ENCODE measurements at regions of chr9 and their contacts with region 1.

Region 1: DNA sequence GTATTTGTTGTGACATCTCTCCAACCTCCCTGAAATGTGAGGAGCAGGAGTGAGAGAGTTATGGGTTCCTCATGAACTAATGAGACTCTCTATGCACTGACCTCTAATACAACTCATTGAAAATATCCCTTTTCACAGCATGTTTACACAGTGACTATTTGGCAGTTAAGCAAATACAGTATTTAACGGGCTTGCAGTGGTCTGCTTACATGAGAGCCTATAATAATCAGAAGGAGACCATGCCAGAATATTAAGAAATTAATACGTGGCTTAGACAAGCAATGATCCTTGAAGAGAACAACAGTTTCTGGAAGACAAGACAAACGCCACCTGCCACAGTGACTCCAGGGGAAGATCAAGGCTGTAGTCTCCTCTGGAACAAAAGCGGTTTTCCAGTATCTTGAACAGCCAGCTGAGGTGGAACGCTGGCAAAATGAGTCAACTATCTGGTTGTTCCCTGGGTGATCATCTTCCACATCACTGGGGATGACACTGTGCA is 424.5 kb downstream of the DMAC1 start:
- DNase-seq: no peak
- ATAC-seq: no peak
- H3K4me3 ChIP-seq: no peak overlapping the region
- H3K27ac ChIP-seq: no peak overlapping the region
- H3K4me1 ChIP-seq: peaks cover 0 to 19% (median 14%) of the 10 kb centered on the region in 9 donors
- H3K27me3 ChIP-seq: no peaks in the 10 kb centered on the region
- CTCF ChIP-seq: no peak

Region 2: DNA sequence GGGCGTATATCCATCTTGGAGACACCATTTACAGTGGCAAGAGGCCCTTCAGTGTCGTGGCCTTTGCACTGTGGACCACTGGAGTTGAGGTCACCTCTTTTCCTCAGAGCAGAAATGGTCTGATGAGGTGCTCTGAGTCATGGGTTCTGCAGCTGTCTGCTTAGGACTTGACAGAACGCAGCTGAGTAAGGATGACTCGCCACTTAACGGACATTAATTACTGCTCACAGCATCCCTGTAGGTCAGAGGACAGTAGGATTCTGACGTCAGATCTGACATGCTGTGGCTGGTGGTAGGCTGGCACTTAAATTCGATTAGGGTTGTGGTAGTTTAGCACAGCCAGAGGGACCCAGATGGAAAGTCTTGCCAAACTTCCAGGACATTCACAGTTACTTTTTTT is 54.9 kb before region 1 on chr9:
- intact Hi-C with region 1: loop called in 1 of 10 experiments (anchors 5 kb)
- DNase-seq: no peak
- ATAC-seq: peak in 3 of 8 donors; percentile 33 to 63 (median 50)
- H3K4me3 ChIP-seq: no peak overlapping the region
- H3K27ac ChIP-seq: peak overlapping the region in 1 of 10 donors; percentile 20
- H3K4me1 ChIP-seq: peaks cover 0 to 20% (median 10%) of the 10 kb centered on the region in 9 donors
- H3K27me3 ChIP-seq: no peaks in the 10 kb centered on the region
- CTCF ChIP-seq: no peak

Measured in heart right ventricle (tissue), 16 donors.